ENCODE measurements at regions of chr15 and their contacts with region 1.

Region 1: DNA sequence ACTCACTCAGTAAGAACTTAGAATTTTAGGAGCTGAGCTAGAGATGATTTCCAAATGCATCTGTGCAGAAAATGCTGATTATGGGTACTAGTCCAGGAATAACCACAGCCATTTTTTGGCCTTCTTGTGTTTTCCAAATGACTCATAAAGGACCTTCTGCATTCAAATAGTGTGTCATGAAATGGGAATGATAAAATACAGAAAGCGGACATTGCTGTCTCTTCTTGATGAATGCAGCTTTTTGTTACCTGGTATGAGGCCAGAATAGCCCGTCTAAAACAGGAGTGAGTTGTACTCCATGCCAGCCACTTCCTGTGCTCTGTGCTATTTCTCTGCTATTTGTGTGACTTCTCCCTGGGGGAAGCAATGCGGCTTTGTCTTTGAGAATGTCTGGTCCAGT is 20.5 kb upstream of the FRMD5 start:
- DNase-seq: no peak
- ATAC-seq: no peak

Region 2: DNA sequence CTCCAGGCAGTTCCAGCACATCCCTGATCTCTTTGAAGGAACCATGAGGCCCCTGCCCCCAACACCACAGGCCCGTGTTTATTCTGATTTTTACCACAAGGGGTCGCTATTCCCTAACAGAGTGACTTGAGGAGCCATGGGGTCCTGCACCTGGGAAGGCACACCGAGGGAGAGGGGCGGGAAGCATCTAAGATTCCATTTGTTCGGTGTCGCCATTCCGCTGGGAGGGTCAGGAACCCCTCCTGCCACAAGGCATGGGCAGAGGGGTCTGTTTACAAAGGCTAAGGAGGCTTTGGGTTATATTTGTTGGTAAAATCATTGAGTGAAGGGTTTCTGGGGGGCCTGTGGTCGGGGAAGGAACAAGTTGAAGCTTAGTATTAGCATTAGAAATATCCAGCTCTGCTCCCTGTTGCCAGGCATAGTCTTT is 311.7 kb before region 1 on chr15:
- intact Hi-C with region 1: loop called (anchors 5 kb)
- DNase-seq: no peak
- ATAC-seq: peak; percentile 80

Region 3: GRCh38 chr15:43958861-43959330 is 256.7 kb before region 1 on chr15:
- intact Hi-C with region 1: no loop called
- DNase-seq: no peak
- ATAC-seq: no peak

Measured in Right ventricle myocardium superior (tissue), 1 donor.